ENCODE measurements at regions of chr18 and their contacts with region 1.

Region 1: DNA sequence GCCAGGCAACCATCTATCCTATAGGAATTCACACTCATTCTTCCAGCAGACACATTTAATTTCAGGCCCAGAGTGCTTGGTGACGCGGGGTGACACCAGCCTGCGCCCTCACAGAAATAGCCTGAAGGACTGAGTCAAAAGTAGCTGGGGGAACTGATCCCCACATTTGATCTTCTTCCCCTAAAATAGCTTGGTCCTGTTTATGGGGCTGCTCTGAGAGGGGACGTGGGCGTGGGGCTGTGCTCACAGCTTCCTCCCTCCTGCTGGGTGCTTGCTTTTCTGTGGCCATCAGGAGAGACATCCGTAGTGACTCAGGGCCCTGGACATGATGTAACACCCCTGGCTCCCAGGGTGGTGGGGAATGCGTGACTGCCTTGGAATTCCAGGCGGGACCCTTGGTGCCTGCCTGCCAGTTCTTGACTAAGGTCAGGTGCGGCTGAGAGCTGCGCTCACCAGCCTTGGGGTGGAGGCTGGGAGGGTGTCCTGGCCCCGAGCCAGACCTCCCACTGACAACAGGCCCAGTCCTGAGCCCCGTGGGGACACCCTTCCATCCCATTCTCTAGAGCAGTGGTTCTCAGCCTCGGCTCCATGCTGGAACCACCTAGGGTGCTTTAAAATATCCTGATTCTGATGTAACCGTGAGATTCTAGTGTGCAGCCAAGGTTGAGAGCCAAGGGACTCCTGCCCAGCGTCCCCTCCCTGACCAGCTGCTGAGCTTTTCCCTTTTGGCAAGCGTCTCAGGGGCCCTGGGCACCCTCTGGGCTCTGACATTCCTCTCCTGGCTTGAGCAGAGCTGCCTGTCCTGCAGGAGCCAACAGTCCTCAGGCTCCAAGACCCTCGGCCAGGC is 47.4 kb upstream of the SMAD7 start:
- DNase-seq: peak; percentile 84
- ATAC-seq: peak; percentile 72
- H3K4me3 ChIP-seq: no peak overlapping the region
- H3K27ac ChIP-seq: peak overlapping the region; percentile 96
- H3K4me1 ChIP-seq: peaks cover 37% of the 10 kb centered on the region
- H3K27me3 ChIP-seq: no peaks in the 10 kb centered on the region
- CTCF ChIP-seq: no peak

Region 2: DNA sequence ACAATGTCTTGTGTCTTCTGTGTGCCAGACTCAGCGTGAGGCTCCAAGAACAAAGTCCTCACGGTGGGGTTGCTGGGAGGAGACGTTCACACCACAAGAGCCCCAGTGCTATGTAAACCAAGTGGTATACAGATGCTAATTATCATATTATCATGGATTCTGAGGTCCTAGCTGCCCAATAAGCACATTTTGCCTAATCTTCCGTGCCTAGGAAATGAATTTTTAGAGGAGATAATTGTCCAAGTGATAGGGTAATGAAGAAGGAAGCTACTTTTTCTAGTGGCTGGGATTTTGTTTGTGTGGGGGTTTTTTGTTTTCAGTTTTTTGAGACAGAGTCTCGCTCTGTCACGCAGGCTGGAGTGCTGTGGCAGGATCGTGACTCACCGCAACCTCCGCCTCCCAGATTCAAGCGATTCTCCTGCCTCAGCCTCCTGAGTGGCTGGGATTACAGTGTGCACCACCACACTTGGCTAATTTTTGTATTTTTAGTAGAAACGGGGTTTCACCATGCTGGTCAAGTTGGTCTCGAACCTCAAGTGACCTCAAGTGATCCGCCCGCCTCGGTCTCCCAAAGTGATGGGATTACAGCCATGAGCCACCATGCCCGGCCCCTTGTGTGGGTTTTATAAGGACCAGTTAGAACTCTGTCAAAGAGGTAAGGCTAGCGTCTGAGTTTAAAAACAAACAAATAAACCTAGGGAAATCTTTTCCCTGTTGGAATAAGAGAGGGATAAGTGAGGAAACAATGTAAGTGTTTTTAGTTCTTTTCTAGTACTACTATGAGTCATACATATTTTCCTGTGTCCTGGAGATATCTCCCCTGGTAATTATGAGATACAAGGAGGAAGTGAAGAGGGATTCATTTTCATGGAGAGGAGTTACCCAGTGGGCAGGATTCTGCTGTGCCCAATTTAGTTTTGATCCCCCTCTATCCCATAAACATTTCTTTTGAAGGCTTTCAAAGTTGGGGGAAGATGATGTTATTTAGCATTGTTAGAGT is 38.0 kb before region 1 on chr18:
- CTCF ChIA-PET with region 1: no interaction called
- POLR2A ChIA-PET with region 1: no interaction called
- intact Hi-C with region 1: no loop called
- DNase-seq: no peak
- ATAC-seq: peak; percentile 59
- H3K4me3 ChIP-seq: no peak overlapping the region
- H3K27ac ChIP-seq: no peak overlapping the region
- H3K4me1 ChIP-seq: no peaks in the 10 kb centered on the region
- H3K27me3 ChIP-seq: no peaks in the 10 kb centered on the region
- CTCF ChIP-seq: no peak

Region 3: GRCh38 chr18:48975649-48976204 is 22.5 kb before region 1 on chr18:
- CTCF ChIA-PET with region 1: no interaction called
- POLR2A ChIA-PET with region 1: interaction called, 6 read pairs
- intact Hi-C with region 1: loop called (anchors 1 kb)
- DNase-seq: peak; percentile 58
- ATAC-seq: peak; percentile 84
- H3K4me3 ChIP-seq: peak overlapping the region; percentile 61
- H3K27ac ChIP-seq: no peak overlapping the region
- H3K4me1 ChIP-seq: no peaks in the 10 kb centered on the region
- H3K27me3 ChIP-seq: no peaks in the 10 kb centered on the region
- CTCF ChIP-seq: no peak

Region 4: DNA sequence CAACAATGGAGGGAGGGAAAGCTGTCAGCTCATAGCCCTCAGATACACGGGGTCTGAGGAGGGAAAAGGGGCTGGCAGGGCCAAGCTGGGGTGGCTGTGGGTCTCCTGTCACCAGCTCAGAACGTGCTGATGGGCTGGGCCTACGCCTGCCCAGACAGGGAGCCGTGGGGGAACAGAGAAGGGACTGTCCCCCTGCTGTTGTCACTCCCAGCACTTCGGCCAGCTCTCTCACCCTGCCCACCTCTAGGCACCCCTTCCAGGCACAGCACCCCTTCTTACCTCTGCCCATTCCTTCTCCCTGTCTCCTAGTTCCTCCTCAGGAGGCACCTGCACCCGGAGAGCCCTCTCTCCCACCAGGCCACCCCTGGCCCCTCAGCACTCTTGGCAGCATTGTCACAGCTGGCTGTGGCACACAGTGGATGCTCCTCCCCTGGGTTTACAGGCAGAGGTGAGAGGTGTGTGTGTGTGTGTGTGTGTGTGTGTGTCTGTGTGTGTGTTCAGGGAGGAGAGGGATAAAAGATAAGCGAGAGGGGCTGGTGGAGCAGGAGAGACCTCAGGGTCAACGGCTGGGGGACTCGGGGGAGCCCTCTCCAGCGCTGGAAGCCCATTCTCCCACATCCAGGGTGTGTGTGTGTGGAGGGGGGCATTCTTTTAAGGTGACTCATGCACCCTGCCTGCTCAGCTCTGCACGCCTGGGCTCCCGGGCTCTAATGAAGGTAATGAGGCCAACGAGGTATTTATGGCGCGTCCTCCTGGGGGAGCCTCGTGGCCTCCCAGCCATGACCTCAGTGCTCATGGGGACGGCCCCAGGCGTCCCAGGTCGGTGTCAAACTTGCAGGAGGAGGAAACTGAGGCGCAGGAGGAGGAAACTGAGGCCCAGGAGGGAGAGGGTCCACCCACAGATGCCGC is 18.7 kb after region 1 on chr18:
- CTCF ChIA-PET with region 1: interaction called, 3 read pairs
- POLR2A ChIA-PET with region 1: no interaction called
- intact Hi-C with region 1: loop called (anchors 2 kb)
- DNase-seq: peak; percentile 62
- ATAC-seq: peak; percentile 83
- H3K4me3 ChIP-seq: no peak overlapping the region
- H3K27ac ChIP-seq: 0 out of 2 replicates have a peak overlapping the region, but pooled peaks have one; percentile 34
- H3K4me1 ChIP-seq: peaks cover 17% of the 10 kb centered on the region
- H3K27me3 ChIP-seq: no peaks in the 10 kb centered on the region
- CTCF ChIP-seq: no peak